Dorsolateral prefrontal cortex (tissue), 120 donors: ENCODE measurements at regions of chr1 and their contacts with region 1.

Region 1: DNA sequence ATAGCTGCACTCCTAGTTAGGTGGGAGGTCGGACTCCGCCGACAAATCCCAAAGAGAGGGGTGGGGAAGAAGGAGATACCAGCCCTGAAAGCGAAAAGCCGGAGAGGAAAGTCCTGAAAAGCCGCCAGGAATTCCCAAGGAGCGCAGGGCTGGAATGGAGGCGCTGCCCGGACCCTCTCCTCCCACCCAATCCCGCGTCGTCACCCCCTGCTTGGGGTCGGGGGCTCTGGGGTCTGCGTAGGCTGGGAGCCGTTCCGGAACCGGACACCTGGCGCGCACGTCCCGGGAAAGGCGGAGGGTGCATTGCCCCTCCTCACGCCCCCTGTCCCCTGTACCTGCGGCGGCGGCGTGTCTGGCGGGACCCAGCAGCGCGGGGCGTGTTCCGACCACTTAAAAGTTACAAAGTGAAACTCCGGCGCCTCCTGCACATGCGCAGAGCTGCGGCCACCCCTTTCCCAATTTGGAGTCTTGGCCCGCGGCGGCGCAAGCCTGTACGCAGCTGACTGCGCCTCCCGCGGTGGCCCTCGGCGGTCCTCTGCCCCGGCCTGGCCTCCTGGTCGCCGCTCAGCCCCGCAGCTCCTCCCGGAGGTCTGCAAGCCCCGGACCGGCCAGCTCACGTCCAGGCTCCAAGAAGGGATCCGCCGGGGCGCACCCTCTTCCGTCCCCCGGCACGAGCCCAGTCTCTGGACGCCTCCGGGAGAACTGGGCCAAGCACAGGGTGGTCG is at the start of gene TMEM63A:
- DNase-seq: peak; percentile 47 to 91 (median 86)
- H3K4me3 ChIP-seq: peak within 1 kb of the TSS; percentile 62 to 98 (median 87)
- H3K27ac ChIP-seq: peak within 1 kb of the TSS; percentile 58 to 100 (median 97)
- H3K27me3 ChIP-seq: no peaks in the 10 kb centered on the region
- CTCF ChIP-seq: peak; percentile 3 to 72 (median 50)
- total RNA-seq, gene TMEM63A: 47.1 to 833 (median 180) TPM

Region 2: DNA sequence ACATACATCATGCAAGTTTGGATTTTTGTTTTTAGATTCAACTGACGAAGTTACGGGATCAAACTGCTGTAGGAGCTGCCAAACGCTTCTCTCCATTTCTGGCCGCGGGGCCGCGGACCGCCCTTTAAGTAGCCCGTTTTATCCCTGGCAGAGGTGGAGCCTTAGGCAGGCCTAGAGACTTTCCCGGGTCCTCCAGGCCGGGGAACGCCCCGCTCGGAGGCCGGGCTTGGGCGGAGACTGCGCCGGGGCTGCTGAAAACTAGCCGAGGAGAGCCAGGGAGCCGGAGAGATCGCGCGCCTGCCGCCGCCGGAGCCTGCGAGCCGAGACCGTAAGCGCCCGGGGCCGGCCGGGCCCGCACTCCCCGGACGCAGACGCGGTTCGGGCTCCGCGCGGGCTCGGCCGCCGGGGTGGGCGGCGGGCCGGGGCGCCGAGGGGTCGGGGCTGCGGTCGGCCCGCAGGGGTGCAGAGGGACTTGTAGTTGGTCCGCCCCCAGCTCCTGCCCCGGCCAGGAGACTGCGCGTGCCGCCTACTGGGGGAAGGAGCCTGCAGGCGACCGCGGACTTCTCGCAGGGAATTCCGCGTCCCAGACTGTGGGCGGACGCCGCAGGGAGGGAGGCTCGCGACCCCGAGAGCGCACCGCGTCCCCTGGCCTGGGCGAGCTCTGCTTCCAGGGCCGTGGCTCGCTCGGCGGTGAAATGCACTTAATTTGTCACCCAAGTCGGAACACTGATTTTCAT is 72.1 kb before region 1 on chr1 and contains the start of gene EPHX1:
- intact Hi-C with region 1: loop called (anchors 2 to 5 kb)
- DNase-seq: peak; percentile 75 to 91 (median 82)
- H3K4me3 ChIP-seq: peak within 1 kb of the TSS; percentile 66 to 88 (median 78)
- H3K27ac ChIP-seq: peak within 1 kb of the TSS; percentile 35 to 97 (median 82)
- H3K27me3 ChIP-seq: no peaks in the 10 kb centered on the region
- CTCF ChIP-seq: peak in 35 of 56 donors; percentile 6 to 60 (median 30)
- total RNA-seq, gene EPHX1: 56.7 to 268 (median 111) TPM

Region 3: DNA sequence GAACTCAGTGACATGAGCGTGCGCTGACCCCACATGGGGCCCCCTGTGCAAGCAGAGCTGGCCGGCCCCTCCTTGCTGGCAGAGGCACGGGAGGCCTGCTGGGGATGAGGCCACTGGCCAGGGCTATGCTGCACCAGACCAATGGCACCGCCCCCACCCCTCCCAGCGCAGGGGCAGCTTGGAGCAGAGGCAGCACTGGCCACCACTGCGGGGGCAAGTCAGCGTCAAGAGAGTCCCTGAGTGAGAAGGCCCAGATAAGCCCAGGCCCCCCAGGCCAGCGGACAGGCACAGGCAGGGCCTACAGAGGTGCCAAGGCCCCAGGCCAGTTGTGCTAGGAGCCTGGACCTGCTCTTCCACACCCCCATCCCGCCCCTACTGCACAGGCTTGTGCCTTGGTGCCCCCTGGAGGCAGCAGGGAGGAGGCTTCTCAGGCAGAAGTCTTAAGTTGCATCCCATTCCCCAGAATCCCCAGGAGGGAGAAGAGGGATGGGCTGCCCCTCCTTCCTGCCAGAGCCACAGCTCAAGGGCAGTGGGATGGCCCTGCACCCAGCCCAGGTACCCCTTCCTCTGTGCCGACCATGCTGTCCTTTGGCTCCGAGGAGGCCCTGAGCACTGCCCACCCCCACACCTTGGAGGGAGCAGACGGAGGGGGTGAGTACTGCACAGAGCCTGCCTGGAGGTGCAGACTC is 36.4 kb before region 1 on chr1:
- intact Hi-C with region 1: loop called in 1 of 2 experiments (anchors 5 kb)
- DNase-seq: peak in 8 of 10 donors; percentile 21 to 71 (median 48)
- H3K4me3 ChIP-seq: no peak overlapping the region
- H3K27ac ChIP-seq: peak overlapping the region in 58 of 59 donors; percentile 22 to 99 (median 93)
- H3K27me3 ChIP-seq: no peaks in the 10 kb centered on the region
- CTCF ChIP-seq: peak; percentile 24 to 78 (median 58)

Region 4: GRCh38 chr1:225923692-225924555 is 41.8 kb after region 1 on chr1 and contains the start of gene PYCR2:
- intact Hi-C with region 1: loop called (anchors 2 kb)
- DNase-seq: peak; percentile 89 to 98 (median 94)
- H3K4me3 ChIP-seq: peak within 1 kb of the TSS; percentile 66 to 100 (median 94)
- H3K27ac ChIP-seq: peak within 1 kb of the TSS; percentile 35 to 98 (median 91)
- H3K27me3 ChIP-seq: no peaks in the 10 kb centered on the region
- CTCF ChIP-seq: peak in 32 of 56 donors; percentile 4 to 61 (median 30)
- total RNA-seq, gene PYCR2: 44.8 to 116 (median 65.6) TPM

Region 5: GRCh38 chr1:226001963-226002666 is 120.0 kb after region 1 on chr1:
- intact Hi-C with region 1: no loop called
- DNase-seq: peak in 7 of 10 donors; percentile 10 to 71 (median 43)
- H3K4me3 ChIP-seq: peak overlapping the region in 18 of 59 donors; percentile 3 to 30 (median 17)
- H3K27ac ChIP-seq: peak overlapping the region in 57 of 59 donors; percentile 11 to 99 (median 77)
- H3K27me3 ChIP-seq: no peaks in the 10 kb centered on the region
- CTCF ChIP-seq: peak in 1 of 56 donors; percentile 9